Endothelial cell of umbilical vein (primary cell): ENCODE measurements at regions of chr2 and their contacts with region 1.

Region 1: GRCh38 chr2:71136174-71136573 is 5.7 kb downstream of the MPHOSPH10 start:
- DNase-seq: no peak
- H3K4me3 ChIP-seq: no peak overlapping the region
- H3K27ac ChIP-seq: no peak overlapping the region
- H3K4me1 ChIP-seq: peaks cover 9% of the 10 kb centered on the region
- H3K27me3 ChIP-seq: no peaks in the 10 kb centered on the region
- CTCF ChIP-seq: no peak
- POLR2A ChIP-seq: no peak

Region 2: GRCh38 chr2:71150082-71150816 is 14.1 kb after region 1 on chr2:
- CTCF ChIA-PET with region 1: interaction called, 7 read pairs
- POLR2A ChIA-PET with region 1: interaction called, 10 read pairs
- dilution Hi-C with region 1: no loop called
- intact Hi-C with region 1: no loop called
- DNase-seq: no peak
- H3K4me3 ChIP-seq: no peak overlapping the region
- H3K27ac ChIP-seq: no peak overlapping the region
- H3K4me1 ChIP-seq: no peaks in the 10 kb centered on the region
- H3K27me3 ChIP-seq: no peaks in the 10 kb centered on the region
- CTCF ChIP-seq: no peak
- POLR2A ChIP-seq: no peak